PC-3 (cell line): ENCODE measurements at regions of chr11 and their contacts with region 1.

Region 1: DNA sequence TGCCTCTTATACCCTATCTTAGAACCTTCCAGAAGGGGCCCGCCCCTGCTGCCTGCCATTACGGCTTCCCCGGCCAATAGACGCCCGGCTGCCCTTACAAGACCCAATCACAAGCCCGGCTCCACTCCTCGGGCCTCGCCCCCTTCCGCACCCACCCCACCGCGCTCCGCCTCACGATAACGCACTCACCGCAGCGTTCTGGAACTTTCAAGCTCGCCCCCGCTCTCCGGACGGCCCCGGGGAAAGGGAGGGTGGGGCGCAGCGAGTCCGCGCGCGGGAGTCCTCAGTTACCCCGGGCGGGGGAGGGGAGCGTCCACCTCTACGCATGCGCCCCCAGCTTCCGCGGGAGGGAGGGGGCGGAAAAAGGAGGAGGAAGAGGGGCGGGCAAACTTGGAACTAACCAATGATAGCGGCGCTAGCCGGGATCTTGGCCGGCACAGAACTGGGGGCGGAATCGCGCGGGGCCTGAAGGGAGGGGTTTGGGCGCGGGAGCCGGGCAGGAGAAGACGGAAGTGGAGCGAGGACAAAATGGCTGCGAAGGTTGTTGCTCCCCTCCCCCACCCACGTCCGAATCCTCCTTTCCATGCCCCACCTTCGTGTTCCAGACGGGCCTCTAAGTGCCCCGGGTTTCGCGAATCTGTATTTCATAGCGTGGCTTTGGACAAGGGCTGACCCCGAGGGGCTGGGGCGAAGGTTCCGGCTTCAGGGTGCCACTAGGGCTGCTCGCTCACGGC is 389 bp upstream of the HSPA8 start:
- DNase-seq: peak; percentile 98
- ATAC-seq: peak; percentile 89
- H3K4me3 ChIP-seq: peak overlapping the region; percentile 95
- H3K27ac ChIP-seq: peak overlapping the region; percentile 94
- H3K4me1 ChIP-seq: peaks cover 43% of the 10 kb centered on the region
- H3K27me3 ChIP-seq: no peaks in the 10 kb centered on the region
- CTCF ChIP-seq: no peak

Region 2: GRCh38 chr11:122439911-122440810 is 622.2 kb before region 1 on chr11:
- CTCF ChIA-PET with region 1: no interaction called
- POLR2A ChIA-PET with region 1: interaction called, 11 read pairs
- intact Hi-C with region 1: no loop called
- DNase-seq: no peak
- ATAC-seq: no peak
- H3K4me3 ChIP-seq: 0 out of 2 replicates have a peak overlapping the region, but pooled peaks have one; percentile 2
- H3K27ac ChIP-seq: no peak overlapping the region
- H3K4me1 ChIP-seq: no peaks in the 10 kb centered on the region
- H3K27me3 ChIP-seq: peaks cover 86% of the 10 kb centered on the region
- CTCF ChIP-seq: no peak

Region 3: GRCh38 chr11:122917311-122917710 is 145.0 kb before region 1 on chr11:
- CTCF ChIA-PET with region 1: no interaction called
- POLR2A ChIA-PET with region 1: no interaction called
- intact Hi-C with region 1: no loop called
- DNase-seq: peak; percentile 91
- ATAC-seq: peak; percentile 67
- H3K4me3 ChIP-seq: no peak overlapping the region
- H3K27ac ChIP-seq: no peak overlapping the region
- H3K4me1 ChIP-seq: 0 out of 2 replicates have a peak, but pooled peaks cover 3% of the 10 kb centered on the region
- H3K27me3 ChIP-seq: no peaks in the 10 kb centered on the region
- CTCF ChIP-seq: no peak

Region 4: DNA sequence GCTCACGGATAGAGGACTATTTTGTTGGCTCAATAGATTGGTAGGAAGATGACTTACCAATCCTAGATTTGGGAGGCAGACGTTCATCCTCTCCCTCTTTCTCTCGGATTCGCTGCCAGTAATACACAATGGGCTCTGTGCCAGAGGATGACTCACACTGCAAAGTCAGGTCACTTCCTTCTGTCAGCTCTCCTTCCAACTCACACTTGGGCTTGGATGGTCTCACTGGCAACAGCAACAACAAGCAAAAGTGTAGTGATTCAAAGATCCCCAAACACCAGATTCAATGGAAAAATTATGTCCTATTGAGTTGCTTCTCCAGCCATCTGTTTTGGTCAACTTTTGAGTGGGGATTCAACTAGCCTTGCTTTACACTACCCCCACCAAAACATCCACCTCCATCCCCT is 21.3 kb after region 1 on chr11:
- CTCF ChIA-PET with region 1: no interaction called
- POLR2A ChIA-PET with region 1: no interaction called
- intact Hi-C with region 1: loop called (anchors 1 kb)
- DNase-seq: peak; percentile 100
- ATAC-seq: peak; percentile 96
- H3K4me3 ChIP-seq: no peak overlapping the region
- H3K27ac ChIP-seq: peak overlapping the region; percentile 75
- H3K4me1 ChIP-seq: peaks cover 18% of the 10 kb centered on the region
- H3K27me3 ChIP-seq: no peaks in the 10 kb centered on the region
- CTCF ChIP-seq: no peak

Region 5: DNA sequence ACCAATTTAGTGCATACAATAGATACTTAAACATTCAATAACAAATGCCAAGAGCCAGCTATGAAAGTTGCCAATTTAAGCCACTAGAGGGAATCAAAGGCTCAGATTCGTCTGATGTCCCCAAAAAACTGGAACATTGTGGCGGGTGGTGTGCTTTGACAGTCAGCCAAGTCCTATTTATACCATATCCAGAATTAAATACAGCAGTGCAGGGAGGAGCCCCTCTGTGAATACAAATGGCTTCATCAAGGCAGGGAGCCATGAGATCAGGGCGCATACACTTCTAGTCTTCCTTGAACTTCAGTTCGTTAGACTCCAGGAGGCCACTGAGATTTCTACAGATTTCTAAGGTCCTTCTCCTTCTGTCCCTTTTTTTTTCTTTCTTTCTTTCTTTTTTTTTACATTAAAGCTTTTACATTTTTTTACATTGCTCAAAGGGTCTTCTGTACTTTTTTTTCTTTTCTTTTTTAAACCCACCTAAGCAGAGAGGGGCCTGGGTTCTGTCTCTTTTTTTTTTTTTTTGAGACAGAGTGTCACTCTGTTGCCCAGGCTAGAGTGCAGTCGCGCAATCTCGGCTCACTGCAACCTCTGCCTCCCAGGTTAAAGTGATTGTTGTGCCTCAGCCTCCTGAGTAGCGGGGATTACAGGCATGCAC is 41.1 kb after region 1 on chr11:
- CTCF ChIA-PET with region 1: interaction called, 16 read pairs
- POLR2A ChIA-PET with region 1: interaction called, 12 read pairs
- intact Hi-C with region 1: no loop called
- DNase-seq: peak; percentile 87
- ATAC-seq: peak; percentile 75
- H3K4me3 ChIP-seq: no peak overlapping the region
- H3K27ac ChIP-seq: no peak overlapping the region
- H3K4me1 ChIP-seq: 0 out of 2 replicates have a peak, but pooled peaks cover 4% of the 10 kb centered on the region
- H3K27me3 ChIP-seq: no peaks in the 10 kb centered on the region
- CTCF ChIP-seq: peak; percentile 93

Region 6: GRCh38 chr11:123152956-123153355 is 90.6 kb after region 1 on chr11:
- CTCF ChIA-PET with region 1: no interaction called
- POLR2A ChIA-PET with region 1: no interaction called
- intact Hi-C with region 1: no loop called
- DNase-seq: no peak
- ATAC-seq: no peak
- H3K4me3 ChIP-seq: no peak overlapping the region
- H3K27ac ChIP-seq: no peak overlapping the region
- H3K4me1 ChIP-seq: peaks cover under 1% of the 10 kb centered on the region
- H3K27me3 ChIP-seq: no peaks in the 10 kb centered on the region
- CTCF ChIP-seq: no peak

Region 7: DNA sequence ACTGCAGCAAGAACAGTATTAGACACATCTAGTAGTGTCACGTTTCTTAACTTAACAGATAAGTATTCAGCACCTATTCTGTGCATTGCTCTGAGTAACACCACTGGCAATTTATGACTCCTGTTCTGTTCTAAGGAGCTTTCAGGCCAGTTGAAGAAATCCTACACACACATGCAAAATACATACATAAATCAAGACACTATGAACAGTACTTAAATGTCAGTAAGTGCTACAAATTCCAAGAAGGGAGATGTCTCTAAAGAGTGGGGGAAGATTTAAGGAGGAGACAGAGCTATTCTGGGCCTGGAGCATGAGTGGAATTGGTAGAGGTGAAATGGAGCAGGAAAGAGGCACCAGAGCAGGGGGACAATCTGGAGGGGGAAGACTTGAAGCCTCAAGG is 179.0 kb after region 1 on chr11:
- CTCF ChIA-PET with region 1: interaction called, 9 read pairs
- POLR2A ChIA-PET with region 1: interaction called, 10 read pairs
- intact Hi-C with region 1: no loop called
- DNase-seq: no peak
- ATAC-seq: no peak
- H3K4me3 ChIP-seq: no peak overlapping the region
- H3K27ac ChIP-seq: no peak overlapping the region
- H3K4me1 ChIP-seq: peaks cover 20% of the 10 kb centered on the region
- H3K27me3 ChIP-seq: no peaks in the 10 kb centered on the region
- CTCF ChIP-seq: no peak

Region 8: DNA sequence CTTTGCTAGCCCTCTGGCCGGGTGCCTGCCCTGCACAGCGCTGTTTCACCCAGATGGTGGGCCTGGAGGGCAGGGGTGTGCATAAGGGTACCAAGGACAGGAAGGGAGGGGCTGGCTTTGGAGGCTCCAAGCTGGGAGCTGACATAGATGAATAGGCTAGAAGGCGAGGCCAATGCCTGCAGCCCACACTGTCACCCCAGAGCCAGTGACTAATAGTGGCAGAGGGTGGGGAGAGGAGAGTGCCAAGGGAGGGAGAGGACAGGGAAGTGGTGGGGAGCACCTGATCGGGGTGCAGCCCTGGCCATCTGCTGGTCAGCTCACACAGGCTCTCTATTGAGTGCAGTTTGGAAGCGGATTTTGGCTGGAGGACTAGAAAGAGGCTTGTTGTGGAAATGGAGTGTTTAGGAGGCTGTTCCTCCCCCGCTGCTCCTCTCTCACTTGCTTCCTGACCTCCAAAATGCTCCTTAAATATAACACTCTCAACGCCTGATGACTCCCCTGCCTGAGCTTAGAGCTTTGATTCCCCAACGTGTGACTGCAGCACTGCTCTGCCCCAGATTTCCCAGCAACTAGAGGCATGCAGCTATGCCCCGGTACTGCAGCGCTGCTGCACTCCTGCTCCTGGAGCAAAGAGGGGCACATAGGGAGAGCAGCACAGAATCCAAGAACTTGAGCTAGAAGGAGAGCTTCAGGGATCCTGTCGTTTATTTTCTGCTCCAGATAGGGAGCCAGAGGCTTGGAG is 456.9 kb after region 1 on chr11:
- CTCF ChIA-PET with region 1: no interaction called
- POLR2A ChIA-PET with region 1: no interaction called
- intact Hi-C with region 1: no loop called
- DNase-seq: peak; percentile 81
- ATAC-seq: peak; percentile 93
- H3K4me3 ChIP-seq: no peak overlapping the region; the same call in 1 of the 2 replicates
- H3K27ac ChIP-seq: peak overlapping the region; percentile 67
- H3K4me1 ChIP-seq: peaks cover 27% of the 10 kb centered on the region
- H3K27me3 ChIP-seq: no peaks in the 10 kb centered on the region
- CTCF ChIP-seq: no peak